IMR-90 (cell line): ENCODE measurements at regions of chr9 and their contacts with region 1.

Region 1: GRCh38 chr9:17865881-17866280 is 287.0 kb downstream of the SH3GL2 start:
- DNase-seq: no peak
- ATAC-seq: no peak
- H3K4me3 ChIP-seq: no peak overlapping the region
- H3K27ac ChIP-seq: no peak overlapping the region
- H3K4me1 ChIP-seq: no peaks in the 10 kb centered on the region
- H3K27me3 ChIP-seq: no peaks in the 10 kb centered on the region
- CTCF ChIP-seq: no peak
- POLR2A ChIP-seq: no peak
- RAD21 ChIP-seq: no peak

Region 2: GRCh38 chr9:17725399-17726010 is 140.4 kb before region 1 on chr9:
- CTCF ChIA-PET with region 1: no interaction called
- POLR2A ChIA-PET with region 1: no interaction called
- dilution Hi-C with region 1: no loop called
- in situ Hi-C with region 1: no loop called
- intact Hi-C with region 1: no loop called
- DNase-seq: no peak
- ATAC-seq: no peak
- H3K4me3 ChIP-seq: no peak overlapping the region
- H3K27ac ChIP-seq: no peak overlapping the region
- H3K4me1 ChIP-seq: no peaks in the 10 kb centered on the region
- H3K27me3 ChIP-seq: no peaks in the 10 kb centered on the region
- CTCF ChIP-seq: no peak
- POLR2A ChIP-seq: no peak
- RAD21 ChIP-seq: no peak

Region 3: GRCh38 chr9:17824191-17824590 is 41.7 kb before region 1 on chr9:
- CTCF ChIA-PET with region 1: no interaction called
- POLR2A ChIA-PET with region 1: no interaction called
- dilution Hi-C with region 1: no loop called
- in situ Hi-C with region 1: no loop called
- intact Hi-C with region 1: no loop called
- DNase-seq: peak; percentile 1
- ATAC-seq: no peak
- H3K4me3 ChIP-seq: no peak overlapping the region
- H3K27ac ChIP-seq: no peak overlapping the region
- H3K4me1 ChIP-seq: no peaks in the 10 kb centered on the region
- H3K27me3 ChIP-seq: no peaks in the 10 kb centered on the region
- CTCF ChIP-seq: no peak
- POLR2A ChIP-seq: no peak
- RAD21 ChIP-seq: no peak

Region 4: GRCh38 chr9:17852108-17852507 is 13.8 kb before region 1 on chr9:
- CTCF ChIA-PET with region 1: no interaction called
- POLR2A ChIA-PET with region 1: interaction called, 15 read pairs
- dilution Hi-C with region 1: no loop called
- in situ Hi-C with region 1: no loop called
- intact Hi-C with region 1: no loop called
- DNase-seq: no peak
- ATAC-seq: no peak
- H3K4me3 ChIP-seq: no peak overlapping the region
- H3K27ac ChIP-seq: no peak overlapping the region
- H3K4me1 ChIP-seq: no peaks in the 10 kb centered on the region
- H3K27me3 ChIP-seq: no peaks in the 10 kb centered on the region; the same call in 1 of the 2 replicates
- CTCF ChIP-seq: no peak
- POLR2A ChIP-seq: no peak
- RAD21 ChIP-seq: no peak

Region 5: GRCh38 chr9:17888066-17888465 is 22.2 kb after region 1 on chr9:
- CTCF ChIA-PET with region 1: no interaction called
- POLR2A ChIA-PET with region 1: no interaction called
- dilution Hi-C with region 1: no loop called
- in situ Hi-C with region 1: no loop called
- intact Hi-C with region 1: no loop called
- DNase-seq: no peak
- ATAC-seq: no peak
- H3K4me3 ChIP-seq: no peak overlapping the region
- H3K27ac ChIP-seq: no peak overlapping the region
- H3K4me1 ChIP-seq: no peaks in the 10 kb centered on the region
- H3K27me3 ChIP-seq: no peaks in the 10 kb centered on the region
- CTCF ChIP-seq: no peak
- POLR2A ChIP-seq: no peak
- RAD21 ChIP-seq: no peak